Left colon (tissue), 2 donors: ENCODE measurements at regions of chr1 and their contacts with region 1.

Region 1: GRCh38 chr1:151968058-151968457 is 25.6 kb downstream of the S100A10 start:
- DNase-seq: peak; percentile 55 to 56
- ATAC-seq: peak; percentile 76

Region 2: DNA sequence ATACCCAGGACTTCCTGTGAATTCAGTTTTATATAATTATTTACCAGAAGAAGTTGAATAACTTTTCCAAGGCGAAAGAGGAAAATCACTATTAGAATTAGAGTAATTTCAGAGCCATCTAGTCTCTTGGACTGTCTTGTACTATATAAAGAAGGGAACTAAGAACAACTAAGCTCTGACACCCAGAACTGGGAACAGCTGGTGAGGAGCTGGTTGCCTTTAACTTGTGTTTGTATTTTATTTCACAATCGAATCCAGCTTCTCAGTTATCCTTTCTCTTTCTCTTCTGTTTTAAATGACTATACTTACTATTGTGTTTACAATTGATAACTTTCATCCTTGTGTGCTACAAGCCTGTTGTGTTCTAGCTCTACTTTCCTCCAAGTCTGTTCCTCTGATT is 347.8 kb before region 1 on chr1:
- intact Hi-C with region 1: no loop called
- DNase-seq: no peak
- ATAC-seq: peak; percentile 41

Region 3: GRCh38 chr1:152001391-152002249 is 33.6 kb after region 1 on chr1:
- intact Hi-C with region 1: loop called in 1 of 2 experiments (anchors 5 kb)
- DNase-seq: peak; percentile 85 to 94
- ATAC-seq: peak; percentile 74

Region 4: DNA sequence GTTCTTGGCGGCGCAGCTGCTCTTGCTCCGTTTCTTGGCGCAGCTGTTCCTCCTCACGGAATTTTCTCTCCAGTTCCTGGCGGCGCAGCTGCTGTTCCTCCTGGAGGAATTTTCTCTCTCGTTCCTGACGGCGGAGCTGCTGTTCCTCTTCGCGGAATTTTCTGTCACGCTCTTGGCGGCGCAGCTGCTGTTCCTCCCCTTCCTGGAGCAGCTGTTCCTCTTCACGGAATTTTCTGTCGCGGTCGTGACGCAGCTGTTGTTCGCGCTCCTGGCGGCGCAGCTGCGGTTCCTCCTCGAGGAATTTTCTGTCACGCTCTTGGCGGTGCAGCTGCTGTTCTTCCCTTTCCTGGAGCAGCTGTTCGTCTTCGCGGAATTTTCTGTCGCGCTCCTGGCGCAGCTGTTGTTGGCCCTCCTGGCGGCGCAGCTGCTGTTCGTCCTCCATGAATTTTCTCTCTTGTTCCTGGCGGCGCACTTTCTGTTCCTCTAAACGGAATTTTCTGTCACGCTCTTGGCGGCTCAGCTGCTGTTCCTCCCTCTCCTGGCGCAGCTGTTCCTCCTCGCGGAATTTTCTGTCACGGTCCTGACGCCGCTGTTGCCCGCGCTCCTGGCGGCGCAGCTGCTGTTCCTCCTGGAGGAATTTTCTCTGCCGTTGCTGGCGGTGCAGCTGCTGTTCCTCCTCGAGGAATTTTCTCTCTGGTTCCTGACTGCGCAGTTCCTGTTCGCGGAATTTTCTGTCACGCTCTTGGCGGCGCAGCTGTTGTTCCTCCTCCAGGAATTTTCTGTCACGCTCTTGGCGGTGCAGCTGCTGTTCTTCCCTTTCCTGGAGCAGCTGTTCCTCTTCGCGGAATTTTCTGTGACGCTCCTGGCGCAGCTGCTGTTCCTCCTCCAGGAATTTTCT is 140.2 kb after region 1 on chr1:
- intact Hi-C with region 1: no loop called
- DNase-seq: peak; percentile 39 to 45
- ATAC-seq: peak; percentile 34